Sigmoid colon (tissue), 7 donors: ENCODE measurements at regions of chr9 and their contacts with region 1.

Region 1: DNA sequence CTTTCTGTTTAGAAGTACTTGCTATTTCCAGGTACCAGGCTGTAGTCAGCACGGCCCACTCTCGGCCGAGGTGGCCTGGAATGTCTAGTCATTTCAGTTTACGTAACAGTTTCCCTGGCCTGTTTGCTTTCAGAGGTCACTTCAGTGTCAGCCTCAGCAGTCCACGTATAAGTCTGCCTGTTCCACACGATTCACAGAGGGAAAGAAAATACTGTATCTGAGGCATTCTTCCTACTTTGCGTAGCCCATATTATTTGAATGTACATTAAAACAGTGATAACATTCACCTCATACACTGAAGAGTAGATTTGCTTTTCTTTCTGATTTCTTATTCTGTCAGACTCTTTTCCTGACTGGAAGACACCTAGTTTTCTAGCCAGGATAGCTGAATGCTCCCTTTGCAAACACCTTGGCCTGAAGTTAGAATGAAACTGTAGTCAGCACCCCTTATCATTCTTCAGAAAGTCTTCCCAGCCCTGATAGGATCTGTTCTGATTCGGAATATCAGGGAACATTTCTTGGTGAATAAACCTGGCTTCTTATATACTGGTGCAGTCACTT is 140.9 kb downstream of the AOPEP start:
- DNase-seq: peak; percentile 86
- H3K4me3 ChIP-seq: peak overlapping the region in 2 of 4 donors; percentile 2 to 10
- H3K27ac ChIP-seq: peak overlapping the region; percentile 74 to 88 (median 82)
- H3K4me1 ChIP-seq: peaks cover 0 to 64% (median 53%) of the 10 kb centered on the region in 4 donors
- H3K27me3 ChIP-seq: no peaks in the 10 kb centered on the region
- CTCF ChIP-seq: no peak
- EP300 ChIP-seq: peak in 1 of 4 donors; percentile 33
- POLR2A ChIP-seq: no peak

Region 2: GRCh38 chr9:94805585-94805984 is 61.8 kb before region 1 on chr9:
- intact Hi-C with region 1: loop called (anchors 5 kb)
- DNase-seq: no peak
- H3K4me3 ChIP-seq: no peak overlapping the region
- H3K27ac ChIP-seq: peak overlapping the region in 3 of 4 donors; percentile 4 to 65 (median 53)
- H3K4me1 ChIP-seq: peaks cover 0 to 47% (median 29%) of the 10 kb centered on the region in 4 donors
- H3K27me3 ChIP-seq: no peaks in the 10 kb centered on the region
- CTCF ChIP-seq: no peak
- EP300 ChIP-seq: no peak
- POLR2A ChIP-seq: no peak

Region 3: DNA sequence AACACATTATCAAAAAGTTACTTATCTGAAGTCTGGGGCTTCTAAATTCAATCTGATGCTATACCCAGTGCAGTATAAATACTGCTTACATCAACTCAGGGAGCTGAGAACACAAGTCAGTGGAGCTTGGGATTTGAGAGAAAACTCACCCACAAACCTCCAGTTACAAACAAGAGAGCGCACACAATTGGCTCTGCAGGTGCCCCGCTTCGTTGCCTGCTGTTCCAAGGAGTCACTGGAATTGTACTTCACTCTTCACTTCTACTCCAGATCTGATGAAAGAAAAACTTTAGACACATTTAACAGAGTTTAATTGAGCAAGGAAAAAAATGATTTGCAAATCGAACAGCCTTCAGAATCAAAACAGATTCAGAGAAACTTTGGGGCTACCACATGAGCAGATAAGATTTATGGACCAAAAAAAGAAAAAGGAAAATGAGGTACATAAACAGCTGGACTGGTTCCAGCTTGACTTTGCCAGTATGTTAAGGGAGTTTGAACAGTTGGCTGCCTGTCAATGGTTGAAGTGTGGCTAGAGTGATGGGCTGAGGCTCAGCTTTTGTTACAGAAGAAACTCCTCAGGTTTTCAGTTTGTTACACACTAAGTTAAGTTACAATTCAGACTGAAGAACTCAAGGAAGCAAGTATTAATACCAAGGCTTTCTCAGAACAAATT is 15.7 kb after region 1 on chr9:
- intact Hi-C with region 1: no loop called
- DNase-seq: no peak
- H3K4me3 ChIP-seq: no peak overlapping the region
- H3K27ac ChIP-seq: no peak overlapping the region
- H3K4me1 ChIP-seq: peaks cover 0 to 7% (median 4%) of the 10 kb centered on the region in 4 donors
- H3K27me3 ChIP-seq: no peaks in the 10 kb centered on the region
- CTCF ChIP-seq: no peak
- EP300 ChIP-seq: no peak
- POLR2A ChIP-seq: no peak

Region 4: GRCh38 chr9:95127249-95128176 is 260.2 kb after region 1 on chr9:
- intact Hi-C with region 1: loop called (anchors 5 kb)
- DNase-seq: peak; percentile 94
- H3K4me3 ChIP-seq: peak overlapping the region; percentile 14 to 48 (median 34)
- H3K27ac ChIP-seq: peak overlapping the region in 3 of 4 donors; percentile 3 to 62 (median 5)
- H3K4me1 ChIP-seq: peaks cover 0 to 28% (median 10%) of the 10 kb centered on the region in 4 donors
- H3K27me3 ChIP-seq: no peaks in the 10 kb centered on the region
- CTCF ChIP-seq: peak; percentile 91 to 98 (median 96)
- EP300 ChIP-seq: no peak
- POLR2A ChIP-seq: no peak